ENCODE measurements at regions of chr5 and their contacts with region 1.

Region 1: GRCh38 chr5:123802298-123802951 is 290.4 kb downstream of the CSNK1G3 start:
- DNase-seq: no peak
- H3K4me3 ChIP-seq: no peak overlapping the region
- H3K27ac ChIP-seq: no peak overlapping the region
- H3K4me1 ChIP-seq: no peaks in the 10 kb centered on the region
- H3K27me3 ChIP-seq: no peaks in the 10 kb centered on the region
- CTCF ChIP-seq: no peak

Region 2: DNA sequence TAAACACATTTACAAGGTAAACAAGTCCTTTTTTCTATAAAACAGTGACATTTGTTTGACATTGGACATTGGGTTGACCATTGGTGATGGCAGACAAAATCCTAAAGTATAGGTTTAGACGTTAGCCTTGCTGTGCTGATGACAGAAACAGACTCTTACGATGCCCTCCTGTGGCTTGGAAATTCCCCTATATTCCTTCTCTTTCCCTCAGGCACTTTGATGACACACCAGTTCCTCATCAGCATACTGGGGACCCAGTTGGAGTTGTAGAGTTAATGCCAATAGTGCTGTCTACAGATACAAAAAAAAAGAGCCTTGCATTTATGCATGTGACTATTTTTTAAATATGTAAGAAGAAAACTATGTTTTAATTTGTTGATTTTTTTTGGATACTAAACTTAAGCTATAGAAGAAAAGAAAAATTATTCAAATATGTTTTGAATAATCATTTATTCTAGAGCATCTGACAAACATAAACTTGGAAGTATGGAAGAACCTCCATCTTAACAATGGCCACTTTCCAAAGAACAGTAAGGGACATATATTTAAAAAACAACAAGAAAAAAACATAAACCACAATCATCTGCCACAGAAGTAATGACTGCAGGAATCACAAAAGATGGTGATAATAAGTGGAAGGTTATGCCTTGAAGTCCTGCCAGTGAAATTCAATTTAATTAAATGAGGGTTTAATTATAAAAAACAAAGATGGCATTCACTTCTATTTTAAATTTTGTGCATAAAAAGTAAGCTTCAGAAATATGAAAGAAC is 1566.0 kb before region 1 on chr5:
- intact Hi-C with region 1: loop called (anchors 5 kb)
- DNase-seq: no peak
- H3K4me3 ChIP-seq: no peak overlapping the region
- H3K27ac ChIP-seq: no peak overlapping the region
- H3K4me1 ChIP-seq: no peaks in the 10 kb centered on the region
- H3K27me3 ChIP-seq: no peaks in the 10 kb centered on the region
- CTCF ChIP-seq: no peak

Region 3: DNA sequence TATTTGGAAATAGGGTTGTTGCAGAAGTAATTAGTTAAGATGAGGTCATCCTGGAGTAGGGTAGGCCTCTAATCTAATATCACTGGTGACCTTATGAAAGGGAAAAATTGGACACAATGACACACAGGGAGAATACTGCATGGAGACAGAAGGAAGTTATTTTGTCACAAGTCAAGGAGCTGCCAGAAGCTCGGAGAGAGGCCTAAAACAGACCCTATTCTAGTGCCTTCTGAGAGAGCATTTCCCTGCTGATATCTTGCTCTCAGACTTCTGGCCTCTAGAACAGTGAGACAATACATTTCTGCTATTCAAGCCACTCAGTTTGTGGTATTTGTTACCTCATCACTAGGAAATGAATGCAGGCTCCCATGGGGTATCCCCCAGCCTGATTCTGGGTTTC is 42.4 kb after region 1 on chr5:
- intact Hi-C with region 1: no loop called
- DNase-seq: no peak
- H3K4me3 ChIP-seq: no peak overlapping the region
- H3K27ac ChIP-seq: no peak overlapping the region
- H3K4me1 ChIP-seq: no peaks in the 10 kb centered on the region
- H3K27me3 ChIP-seq: no peaks in the 10 kb centered on the region
- CTCF ChIP-seq: no peak